ENCODE measurements at regions of chr5 and their contacts with region 1.

Region 1: DNA sequence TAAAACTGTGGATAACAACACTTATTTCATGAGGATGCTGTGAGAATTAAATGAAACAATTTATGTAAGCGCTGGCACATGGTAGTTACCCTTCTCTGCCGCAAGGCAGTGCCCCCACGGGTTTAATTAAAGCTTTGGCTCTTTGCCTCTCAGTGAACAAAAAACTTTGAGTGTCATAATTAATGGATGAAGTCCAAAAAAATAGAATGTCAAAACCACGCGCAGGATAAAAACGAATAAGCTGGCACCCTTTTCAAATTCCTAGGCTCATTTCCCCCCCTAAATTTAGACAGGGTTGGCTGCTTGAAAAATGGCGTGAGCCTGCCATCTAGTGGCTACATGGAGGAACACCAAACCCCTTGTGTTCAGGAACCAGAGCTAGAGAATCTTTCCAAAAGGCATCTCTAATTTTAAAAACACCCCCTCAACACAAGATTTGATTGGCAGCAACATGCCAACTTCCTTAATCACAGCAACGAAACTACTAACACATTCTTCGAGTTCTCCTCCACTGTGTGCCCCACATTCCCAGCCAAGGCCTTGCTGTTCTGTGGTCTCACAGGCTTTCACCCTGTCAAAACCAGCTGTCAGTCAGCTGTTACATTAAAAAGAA is 29.0 kb upstream of the CCNG1 start:
- DNase-seq: peak; percentile 76
- H3K4me3 Mint-ChIP-seq: peak overlapping the region; percentile 26
- H3K27ac Mint-ChIP-seq: peak overlapping the region; percentile 95
- H3K4me1 Mint-ChIP-seq: peaks cover 45% of the 10 kb centered on the region
- H3K27me3 Mint-ChIP-seq: no peaks in the 10 kb centered on the region
- CTCF ChIP-seq: peak; percentile 96

Region 2: DNA sequence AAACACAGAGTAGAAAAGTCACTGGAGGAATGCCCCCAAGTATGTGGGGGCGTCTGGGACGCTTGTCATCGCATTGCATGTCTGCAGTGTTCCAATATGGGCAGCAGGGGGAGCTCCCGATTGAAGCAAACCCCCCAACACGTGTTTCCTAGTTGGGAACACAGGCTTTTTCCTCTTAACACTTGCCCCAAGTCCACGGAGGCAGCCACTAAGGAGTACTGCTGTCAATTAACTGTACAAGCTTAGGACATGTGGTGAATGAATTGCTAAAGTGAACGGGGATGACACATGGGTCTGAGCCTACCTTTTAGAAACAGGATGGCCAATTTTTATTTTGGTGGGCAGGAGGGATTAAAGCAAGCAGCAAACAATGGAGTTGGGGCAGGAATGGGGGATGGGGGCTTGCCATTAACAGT is 1864.1 kb before region 1 on chr5:
- CTCF ChIA-PET with region 1: interaction called, 5 read pairs
- intact Hi-C with region 1: loop called (anchors 2 kb)
- DNase-seq: peak; percentile 55
- H3K4me3 Mint-ChIP-seq: no peak overlapping the region
- H3K27ac Mint-ChIP-seq: no peak overlapping the region
- H3K4me1 Mint-ChIP-seq: peaks cover 8% of the 10 kb centered on the region
- H3K27me3 Mint-ChIP-seq: peaks cover 50% of the 10 kb centered on the region
- CTCF ChIP-seq: peak; percentile 81

Region 3: DNA sequence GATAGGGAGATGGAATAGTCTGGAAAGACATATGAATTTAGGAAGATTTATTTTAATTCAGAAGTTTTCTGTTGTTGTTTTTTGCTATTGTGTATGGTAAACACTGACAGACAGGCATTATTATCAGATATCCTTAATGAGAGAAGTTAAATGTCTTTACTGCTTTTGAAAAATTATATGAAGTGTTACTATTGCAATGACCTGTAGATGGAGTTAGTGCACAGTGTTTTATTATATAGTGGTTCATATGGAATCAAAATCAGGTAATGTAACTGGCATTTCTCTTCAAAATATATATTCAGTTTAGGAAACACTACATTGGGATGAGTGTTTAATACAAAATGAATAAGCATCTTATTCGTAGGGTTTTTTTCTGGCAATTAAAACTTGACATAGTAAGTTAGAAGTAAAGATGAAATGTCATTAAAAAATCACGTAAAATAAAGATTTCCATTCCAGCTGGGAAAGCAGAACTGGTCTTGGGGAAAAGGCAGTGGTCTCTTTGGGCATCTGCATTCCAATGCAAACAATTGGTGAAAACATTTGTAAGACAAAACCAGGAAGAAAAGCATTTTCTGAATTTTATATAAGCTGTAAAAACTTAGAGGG is 1556.6 kb before region 1 on chr5:
- CTCF ChIA-PET with region 1: interaction called, 3 read pairs
- intact Hi-C with region 1: loop called (anchors 2 kb)
- DNase-seq: no peak
- H3K4me3 Mint-ChIP-seq: no peak overlapping the region
- H3K27ac Mint-ChIP-seq: no peak overlapping the region
- H3K4me1 Mint-ChIP-seq: no peaks in the 10 kb centered on the region
- H3K27me3 Mint-ChIP-seq: no peaks in the 10 kb centered on the region
- CTCF ChIP-seq: no peak

Region 4: GRCh38 chr5:163306421-163306820 is 102.0 kb before region 1 on chr5:
- CTCF ChIA-PET with region 1: interaction called, 21 read pairs
- intact Hi-C with region 1: loop called (anchors 1 kb)
- DNase-seq: no peak
- H3K4me3 Mint-ChIP-seq: no peak overlapping the region
- H3K27ac Mint-ChIP-seq: no peak overlapping the region
- H3K4me1 Mint-ChIP-seq: no peaks in the 10 kb centered on the region
- H3K27me3 Mint-ChIP-seq: no peaks in the 10 kb centered on the region
- CTCF ChIP-seq: no peak

Region 5: GRCh38 chr5:163347671-163348070 is 60.7 kb before region 1 on chr5:
- CTCF ChIA-PET with region 1: no interaction called
- intact Hi-C with region 1: loop called (anchors 2 kb)
- DNase-seq: peak; percentile 76
- H3K4me3 Mint-ChIP-seq: no peak overlapping the region
- H3K27ac Mint-ChIP-seq: no peak overlapping the region
- H3K4me1 Mint-ChIP-seq: no peaks in the 10 kb centered on the region
- H3K27me3 Mint-ChIP-seq: no peaks in the 10 kb centered on the region
- CTCF ChIP-seq: peak; percentile 69

Region 6: GRCh38 chr5:163379298-163380155 is 28.9 kb before region 1 on chr5:
- CTCF ChIA-PET with region 1: interaction called, 3 read pairs
- intact Hi-C with region 1: loop called (anchors 2 kb)
- DNase-seq: peak; percentile 54
- H3K4me3 Mint-ChIP-seq: peak overlapping the region; percentile 36
- H3K27ac Mint-ChIP-seq: peak overlapping the region; percentile 90
- H3K4me1 Mint-ChIP-seq: peaks cover 34% of the 10 kb centered on the region
- H3K27me3 Mint-ChIP-seq: no peaks in the 10 kb centered on the region
- CTCF ChIP-seq: no peak

Measured in Calu3 (cell line).